HAP-1 (cell line): ENCODE measurements at regions of chr1 and their contacts with region 1.

Region 1: DNA sequence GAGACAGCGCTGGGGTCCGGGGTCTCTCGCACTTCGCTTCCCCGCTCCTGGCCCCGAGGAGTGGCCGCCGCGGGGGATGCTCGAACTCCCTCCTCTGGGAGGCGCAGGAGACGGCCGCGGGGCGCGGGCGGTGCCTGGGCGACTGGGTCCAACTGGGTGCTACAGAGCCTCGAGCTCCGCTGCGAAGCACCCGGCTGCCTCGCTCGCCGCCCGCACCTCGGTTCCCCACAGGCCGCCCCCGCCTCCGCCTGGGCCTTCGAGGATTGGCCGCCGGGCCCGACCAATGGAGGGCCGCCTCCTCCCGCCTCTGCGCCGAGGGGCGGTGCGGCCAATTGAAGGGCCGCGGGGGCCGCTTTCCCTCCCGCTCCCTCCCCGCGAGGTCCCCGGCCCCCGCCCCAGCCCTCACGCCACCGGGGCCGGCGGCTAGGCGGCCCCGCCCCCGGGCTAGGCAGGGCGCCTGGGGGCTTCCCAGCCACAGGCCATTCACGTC is at the start of gene CNN3:
- DNase-seq: peak; percentile 89 to 95
- H3K4me3 ChIP-seq: peak within 1 kb of the TSS; percentile 80
- H3K4me1 ChIP-seq: peaks cover 49% of the 10 kb centered on the region
- H3K27me3 ChIP-seq: no peaks in the 10 kb centered on the region

Region 2: GRCh38 chr1:94854458-94855306 is 72.3 kb before region 1 on chr1:
- in situ Hi-C with region 1: loop called (anchors 10 kb)
- DNase-seq: peak; percentile 87 to 90
- H3K4me3 ChIP-seq: peak overlapping the region; percentile 18
- H3K4me1 ChIP-seq: peaks cover 6% of the 10 kb centered on the region
- H3K27me3 ChIP-seq: no peaks in the 10 kb centered on the region